Activated CD4-positive, alpha-beta memory T cell treated with anti-CD3 and anti-CD28 coated beads, Interleukin-2, amount 10 ng/mL, durations not matched to agents 7 days and 5 days (primary cell): ENCODE measurements at regions of chr2 and their contacts with region 1.

Region 1: GRCh38 chr2:236180831-236181453 is 12.8 kb upstream of the GBX2 start:
- DNase-seq: peak; percentile 42
- H3K4me3 Mint-ChIP-seq: no peak overlapping the region
- H3K27ac Mint-ChIP-seq: no peak overlapping the region
- H3K4me1 Mint-ChIP-seq: peaks cover 2% of the 10 kb centered on the region
- H3K27me3 Mint-ChIP-seq: peaks cover 30% of the 10 kb centered on the region

Region 2: GRCh38 chr2:235766278-235766677 is 414.7 kb before region 1 on chr2:
- CTCF ChIA-PET with region 1: interaction called, 11 read pairs
- POLR2A ChIA-PET with region 1: no interaction called
- DNase-seq: peak; percentile 51
- H3K4me3 Mint-ChIP-seq: no peak overlapping the region
- H3K27ac Mint-ChIP-seq: no peak overlapping the region
- H3K4me1 Mint-ChIP-seq: no peaks in the 10 kb centered on the region
- H3K27me3 Mint-ChIP-seq: no peaks in the 10 kb centered on the region

Region 3: GRCh38 chr2:236026841-236027240 is 154.1 kb before region 1 on chr2:
- CTCF ChIA-PET with region 1: no interaction called
- POLR2A ChIA-PET with region 1: no interaction called
- DNase-seq: no peak
- H3K4me3 Mint-ChIP-seq: no peak overlapping the region
- H3K27ac Mint-ChIP-seq: no peak overlapping the region
- H3K4me1 Mint-ChIP-seq: no peaks in the 10 kb centered on the region
- H3K27me3 Mint-ChIP-seq: no peaks in the 10 kb centered on the region